ENCODE measurements at regions of chr17 and their contacts with region 1.

Region 1: GRCh38 chr17:34199932-34200534 is 55.1 kb upstream of the CCL2 start:
- H3K4me3 Mint-ChIP-seq: no peak overlapping the region
- H3K27ac Mint-ChIP-seq: no peak overlapping the region
- H3K4me1 Mint-ChIP-seq: peaks cover 56% of the 10 kb centered on the region
- H3K27me3 Mint-ChIP-seq: peaks cover 42% of the 10 kb centered on the region

Region 2: DNA sequence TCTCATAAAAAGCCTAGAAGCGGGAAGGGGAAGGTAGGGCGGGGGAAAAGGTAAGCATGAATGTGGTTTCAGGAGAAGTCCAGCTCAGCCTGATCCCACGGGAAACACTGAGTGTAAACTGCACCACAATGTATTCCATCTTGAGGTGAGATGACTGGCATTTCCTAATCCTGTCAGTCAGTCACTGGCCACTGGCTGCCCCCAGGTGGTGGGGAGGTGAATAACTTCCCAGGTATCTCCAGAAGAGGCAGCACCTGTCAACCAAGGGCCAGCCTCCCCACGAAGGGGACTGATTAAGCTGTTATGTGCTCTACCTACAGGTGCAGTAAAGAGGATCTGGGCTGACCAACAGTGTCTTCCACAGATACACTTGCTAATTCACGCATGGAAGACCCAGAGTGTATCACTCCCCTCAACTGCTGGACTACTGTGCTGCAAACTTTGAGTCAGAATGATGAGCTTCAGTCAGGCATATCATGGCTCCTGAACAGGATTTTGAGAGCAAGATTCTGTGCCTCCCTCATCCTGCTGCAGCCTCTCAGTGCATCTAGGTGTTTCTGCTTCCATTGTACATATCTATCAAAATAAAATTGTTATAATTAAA is 53.5 kb before region 1 on chr17:
- intact Hi-C with region 1: no loop called
- H3K4me3 Mint-ChIP-seq: no peak overlapping the region
- H3K27ac Mint-ChIP-seq: no peak overlapping the region
- H3K4me1 Mint-ChIP-seq: no peaks in the 10 kb centered on the region
- H3K27me3 Mint-ChIP-seq: peaks cover 7% of the 10 kb centered on the region

Region 3: GRCh38 chr17:34242587-34243363 is 42.7 kb after region 1 on chr17:
- intact Hi-C with region 1: loop called (anchors 2 kb)
- H3K4me3 Mint-ChIP-seq: no peak overlapping the region
- H3K27ac Mint-ChIP-seq: peak overlapping the region; percentile 83
- H3K4me1 Mint-ChIP-seq: peaks cover 38% of the 10 kb centered on the region
- H3K27me3 Mint-ChIP-seq: peaks cover 23% of the 10 kb centered on the region

Region 4: GRCh38 chr17:34306466-34306865 is 106.4 kb after region 1 on chr17:
- intact Hi-C with region 1: loop called (anchors 2 kb)
- H3K4me3 Mint-ChIP-seq: no peak overlapping the region
- H3K27ac Mint-ChIP-seq: peak overlapping the region; percentile 56
- H3K4me1 Mint-ChIP-seq: peaks cover 76% of the 10 kb centered on the region
- H3K27me3 Mint-ChIP-seq: peaks cover 10% of the 10 kb centered on the region

Region 5: DNA sequence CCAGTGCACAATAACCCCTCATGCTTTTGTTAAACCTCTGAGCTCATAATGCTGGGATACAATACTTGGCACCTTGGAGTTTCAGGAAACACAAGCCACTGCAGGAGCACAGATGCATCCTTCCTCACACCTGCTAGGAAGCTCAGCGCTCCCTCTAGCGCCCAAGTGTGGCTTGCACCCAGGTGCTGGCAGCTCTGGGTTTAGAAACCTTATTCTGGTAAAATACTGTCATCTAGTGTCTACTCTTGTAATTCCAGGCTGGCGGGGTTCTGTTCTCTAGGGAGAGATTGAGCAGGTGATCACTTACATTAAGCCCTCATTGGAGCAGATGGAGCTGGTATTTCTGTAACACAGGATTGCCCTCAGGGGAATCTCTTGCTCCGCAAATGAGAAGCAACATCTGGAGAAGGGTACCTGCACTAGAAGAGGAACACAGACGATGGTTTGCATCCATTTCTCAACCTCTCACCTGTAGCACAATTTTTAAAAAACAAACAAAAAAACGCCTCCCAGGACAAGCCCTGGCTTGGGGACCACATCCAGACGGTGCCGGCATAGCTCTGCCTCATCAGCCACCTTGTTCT is 161.5 kb after region 1 on chr17:
- intact Hi-C with region 1: loop called (anchors 1 kb)
- H3K4me3 Mint-ChIP-seq: no peak overlapping the region
- H3K27ac Mint-ChIP-seq: no peak overlapping the region
- H3K4me1 Mint-ChIP-seq: peaks cover 65% of the 10 kb centered on the region
- H3K27me3 Mint-ChIP-seq: peaks cover 18% of the 10 kb centered on the region

Region 6: DNA sequence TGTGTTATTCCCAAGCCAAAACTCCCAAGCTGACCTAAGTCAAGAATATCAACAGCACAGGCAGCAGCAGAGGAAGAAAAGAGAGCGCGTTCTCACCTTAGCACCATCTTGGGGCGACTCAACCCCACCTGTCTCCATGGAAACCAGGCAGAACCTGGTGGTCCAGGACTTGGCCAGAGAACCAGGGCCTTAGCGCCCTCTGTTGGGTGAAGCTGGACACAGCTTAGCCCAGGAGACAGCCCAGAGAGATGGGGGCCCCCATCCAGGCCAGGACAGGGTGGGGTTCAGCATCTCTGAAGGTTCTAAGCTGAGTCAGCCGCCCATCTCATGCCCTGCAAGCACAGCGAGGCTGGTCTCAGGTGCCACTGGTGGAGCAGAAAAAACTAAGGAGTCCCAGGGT is 319.2 kb after region 1 on chr17:
- intact Hi-C with region 1: loop called (anchors 5 kb)
- H3K4me3 Mint-ChIP-seq: no peak overlapping the region
- H3K27ac Mint-ChIP-seq: no peak overlapping the region
- H3K4me1 Mint-ChIP-seq: no peaks in the 10 kb centered on the region
- H3K27me3 Mint-ChIP-seq: peaks cover 6% of the 10 kb centered on the region

Region 7: DNA sequence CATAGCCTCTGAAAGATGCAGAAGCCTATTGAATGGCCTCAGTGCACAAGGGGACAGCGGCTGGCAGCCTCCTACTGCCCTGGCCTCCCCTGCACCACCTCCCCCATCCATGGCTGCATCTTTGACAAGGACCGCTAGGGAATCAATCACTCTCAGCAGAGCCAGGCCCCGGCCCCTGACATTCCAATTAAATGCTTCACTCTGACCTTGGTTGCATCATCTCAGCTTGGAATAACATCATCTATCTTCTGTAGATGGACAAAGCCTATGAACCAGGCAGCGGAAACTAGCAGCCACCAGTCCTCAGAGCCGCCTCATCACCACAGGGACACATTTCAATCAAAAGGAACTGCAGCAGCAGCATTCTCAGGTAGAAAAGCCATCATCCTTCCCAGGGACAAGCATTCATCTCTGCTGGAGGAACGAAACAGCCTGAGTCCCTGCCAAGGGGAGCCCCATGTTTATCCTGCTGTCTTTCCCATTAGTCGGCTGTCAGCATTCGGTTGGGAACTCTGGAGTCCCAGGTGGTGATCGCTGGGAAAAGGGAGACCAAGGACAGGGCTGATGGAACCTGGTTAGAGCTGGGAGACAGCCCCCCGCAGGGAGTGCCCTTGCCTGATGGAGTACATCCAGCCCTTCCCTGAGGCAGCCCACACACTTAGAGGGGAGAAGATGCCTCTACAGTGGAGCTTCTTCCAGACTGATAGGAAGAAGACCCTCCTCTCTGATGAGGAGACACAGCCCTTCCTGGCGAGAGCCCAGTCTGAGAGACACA is 367.8 kb after region 1 on chr17:
- intact Hi-C with region 1: no loop called
- H3K4me3 Mint-ChIP-seq: no peak overlapping the region
- H3K27ac Mint-ChIP-seq: no peak overlapping the region
- H3K4me1 Mint-ChIP-seq: peaks cover 12% of the 10 kb centered on the region
- H3K27me3 Mint-ChIP-seq: peaks cover 32% of the 10 kb centered on the region